Activated T-helper 1 cell treated with anti-CD3 and anti-CD28 coated beads, Interleukin-12 subunit alpha, Interleukin-12 subunit beta, Interleukin-2, Interleukin-4 antibody, amounts not matched to agents 30 ng/mL and 10 ng/mL and 1 ng/mL, durations not matched to agents 14 hours and 24 hours and 36 hours (primary cell): ENCODE measurements at regions of chr9 and their contacts with region 1.

Region 1: DNA sequence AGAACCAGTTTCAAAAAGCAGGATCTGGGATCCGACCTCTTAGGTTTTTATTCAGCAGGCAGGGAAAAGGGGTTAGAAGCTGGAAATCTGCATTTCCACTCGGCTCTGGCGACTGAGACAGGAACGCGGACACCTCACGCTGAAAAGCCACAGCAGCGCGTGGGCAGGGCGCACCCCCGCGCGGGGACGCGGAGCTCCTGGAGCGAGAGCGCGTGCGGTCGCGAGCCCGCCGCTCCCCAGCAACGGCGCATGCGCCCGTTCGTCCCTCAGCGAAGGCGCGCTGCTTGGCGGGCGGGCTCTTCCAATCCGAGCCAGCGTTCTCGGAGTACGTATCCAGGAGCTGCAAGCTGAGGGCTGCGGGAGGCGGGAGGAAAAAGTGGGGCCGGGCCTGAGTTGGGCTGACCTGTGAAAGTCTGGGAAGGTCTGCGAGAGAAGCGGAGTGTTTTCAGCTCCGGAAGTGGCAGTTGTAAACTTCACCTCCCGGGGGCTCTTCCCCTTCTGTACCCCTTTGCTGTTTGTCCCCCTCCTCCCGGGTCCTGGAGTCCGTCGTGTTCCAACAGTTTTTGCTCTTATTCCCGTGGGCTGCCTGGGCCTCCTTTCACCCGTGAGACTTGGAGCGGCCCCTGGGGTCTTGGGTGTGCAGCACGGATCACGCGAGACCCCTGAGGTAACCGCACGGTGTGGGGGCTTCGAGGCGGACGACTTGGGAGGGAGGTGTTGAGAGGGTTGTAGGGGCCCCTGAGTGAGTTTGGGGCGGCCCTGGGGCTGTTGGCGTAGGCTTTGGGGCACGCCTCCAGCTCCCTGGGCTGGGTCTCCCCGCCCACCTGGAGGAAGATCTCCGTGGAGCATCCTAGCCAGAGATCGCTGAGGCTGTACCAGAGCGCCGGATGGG is at the start of gene CCDC171:
- DNase-seq: peak; percentile 84
- H3K4me3 Mint-ChIP-seq: peak within 1 kb of the TSS; percentile 87
- H3K27ac Mint-ChIP-seq: peak within 1 kb of the TSS; percentile 75
- H3K4me1 Mint-ChIP-seq: peaks cover 20% of the 10 kb centered on the region
- H3K27me3 Mint-ChIP-seq: peaks cover 25% of the 10 kb centered on the region
- total RNA-seq, gene CCDC171: 1.4 and 2.0 TPM in 2 replicates

Region 2: GRCh38 chr9:15306757-15307534 is 245.9 kb before region 1 on chr9 and contains the start of gene TTC39B:
- intact Hi-C with region 1: loop called (anchors 1 kb)
- DNase-seq: peak; percentile 82
- H3K4me3 Mint-ChIP-seq: peak within 1 kb of the TSS; percentile 98
- H3K27ac Mint-ChIP-seq: peak within 1 kb of the TSS; percentile 95
- H3K4me1 Mint-ChIP-seq: peaks cover 57% of the 10 kb centered on the region
- H3K27me3 Mint-ChIP-seq: no peaks in the 10 kb centered on the region
- total RNA-seq, gene TTC39B: 23.8 and 26.1 TPM in 2 replicates

Region 3: GRCh38 chr9:15317836-15318235 is 235.0 kb before region 1 on chr9:
- intact Hi-C with region 1: no loop called
- DNase-seq: no peak
- H3K4me3 Mint-ChIP-seq: no peak overlapping the region
- H3K27ac Mint-ChIP-seq: no peak overlapping the region
- H3K4me1 Mint-ChIP-seq: peaks cover 10% of the 10 kb centered on the region
- H3K27me3 Mint-ChIP-seq: no peaks in the 10 kb centered on the region

Region 4: DNA sequence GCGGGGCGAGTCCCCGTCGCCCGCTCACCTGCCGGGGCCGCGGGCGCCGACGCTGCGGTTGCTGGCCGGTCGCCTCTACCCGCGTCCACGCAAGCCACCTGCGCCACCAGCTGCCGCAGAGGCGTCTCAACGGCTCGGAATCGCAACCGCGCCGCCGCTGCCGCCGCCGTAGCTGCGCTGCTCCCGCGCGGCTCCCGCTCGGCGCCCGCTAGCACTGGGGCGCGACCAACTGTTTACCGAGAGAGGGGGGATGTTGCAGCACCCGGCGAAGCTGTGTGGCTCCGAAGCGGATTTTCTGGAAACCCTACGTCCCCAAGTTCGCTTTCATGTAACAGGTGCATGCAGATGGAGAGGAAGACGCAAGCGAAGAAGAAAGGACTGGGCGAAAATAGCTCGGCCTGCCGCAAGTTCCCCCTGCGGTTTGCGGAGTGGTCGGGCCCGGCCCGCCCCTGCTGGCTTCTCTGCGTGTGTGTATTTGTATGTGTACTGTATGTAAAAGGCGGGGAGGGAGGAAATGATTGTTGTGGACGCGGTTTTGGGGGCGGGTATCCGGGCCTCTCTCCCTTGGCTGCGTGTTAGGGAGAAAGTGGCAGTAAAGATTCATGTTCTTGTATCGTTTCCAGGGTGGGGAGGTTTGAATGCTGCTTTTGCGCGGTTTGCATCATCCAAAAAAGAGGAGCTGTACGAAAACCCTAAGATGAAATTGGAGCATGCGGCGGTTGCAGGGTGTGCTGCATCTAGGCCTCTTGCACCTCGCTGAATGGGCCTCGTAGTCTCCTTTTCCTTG is 41.9 kb before region 1 on chr9 and contains the start of gene PSIP1:
- intact Hi-C with region 1: loop called (anchors 1 kb)
- DNase-seq: peak; percentile 84
- H3K4me3 Mint-ChIP-seq: peak within 1 kb of the TSS; percentile 96
- H3K27ac Mint-ChIP-seq: peak within 1 kb of the TSS; percentile 100
- H3K4me1 Mint-ChIP-seq: peaks cover 52% of the 10 kb centered on the region
- H3K27me3 Mint-ChIP-seq: peaks cover 4% of the 10 kb centered on the region
- total RNA-seq, gene PSIP1: 90.6 and 95.3 TPM in 2 replicates

Region 5: DNA sequence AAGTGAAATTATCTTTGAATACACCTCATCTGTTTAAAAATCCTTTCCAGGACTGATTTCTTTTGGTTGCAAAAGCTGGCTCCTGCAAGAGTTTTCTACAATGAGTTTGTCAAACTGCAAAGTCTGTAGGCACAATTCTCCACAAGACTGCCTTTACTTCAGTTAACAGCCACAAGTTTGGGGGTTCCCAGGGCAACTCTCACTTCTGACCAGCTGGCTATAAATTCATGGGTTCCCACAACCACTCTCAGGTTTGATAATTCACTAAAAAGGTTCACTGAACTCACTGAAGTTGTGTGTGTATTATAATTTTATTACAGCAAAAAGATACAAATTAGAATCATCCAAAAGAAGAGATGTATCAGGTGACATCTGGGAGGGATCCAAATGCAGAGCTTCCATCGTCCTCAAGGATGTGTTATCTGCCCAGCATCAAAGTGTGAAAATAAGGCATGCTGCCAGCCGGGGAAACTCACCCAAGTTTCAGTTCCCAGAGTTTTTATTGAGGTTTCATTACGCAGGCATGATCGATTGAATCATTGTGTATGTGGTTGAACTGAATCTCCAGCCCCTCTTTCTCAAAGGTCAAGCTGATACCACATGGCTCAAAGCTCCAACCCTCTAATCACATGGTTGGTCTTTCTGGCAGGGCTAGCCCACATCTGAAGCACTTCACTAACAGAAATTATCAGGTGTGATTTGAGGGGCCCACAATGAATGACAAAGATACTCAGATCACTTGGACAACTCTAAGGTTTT is 23.1 kb before region 1 on chr9:
- intact Hi-C with region 1: no loop called
- DNase-seq: no peak
- H3K4me3 Mint-ChIP-seq: no peak overlapping the region
- H3K27ac Mint-ChIP-seq: no peak overlapping the region
- H3K4me1 Mint-ChIP-seq: no peaks in the 10 kb centered on the region
- H3K27me3 Mint-ChIP-seq: peaks cover 4% of the 10 kb centered on the region